GM12878 (cell line): ENCODE measurements at regions of chr16 and their contacts with region 1.

Region 1: GRCh38 chr16:74455213-74455612 is 33.9 kb upstream of the CLEC18B start:
- DNase-seq: no peak
- ATAC-seq: no peak
- H3K4me3 ChIP-seq: no peak overlapping the region
- H3K27ac ChIP-seq: no peak overlapping the region
- H3K4me1 ChIP-seq: peaks cover 17% of the 10 kb centered on the region
- H3K27me3 ChIP-seq: no peaks in the 10 kb centered on the region
- CTCF ChIP-seq: no peak
- EP300 ChIP-seq: no peak
- POLR2A ChIP-seq: no peak
- RAD21 ChIP-seq: no peak

Region 2: DNA sequence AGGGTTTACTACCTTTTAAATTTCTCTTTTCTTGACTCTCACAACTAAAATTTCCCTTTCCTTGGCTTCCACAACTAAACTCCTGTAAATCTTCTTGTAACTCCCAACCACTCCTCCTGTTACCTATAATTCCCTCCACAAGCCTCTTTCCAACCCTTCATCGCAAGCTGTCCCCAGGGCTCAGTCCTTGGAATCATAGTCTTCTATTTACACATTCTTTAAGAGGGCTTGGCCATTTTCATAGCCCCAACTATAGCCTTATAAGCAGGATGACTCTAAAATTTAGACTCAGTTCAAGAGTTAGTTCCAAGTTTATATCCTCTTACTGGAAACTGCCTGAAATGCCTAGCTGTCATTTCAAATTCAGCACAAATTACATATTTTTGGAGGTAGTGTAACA is 127.8 kb after region 1 on chr16:
- CTCF ChIA-PET with region 1: no interaction called
- POLR2A ChIA-PET with region 1: interaction called, 10 read pairs
- RAD21 ChIA-PET with region 1: no interaction called
- SMC1A ChIA-PET with region 1: no interaction called
- in situ Hi-C with region 1: no loop called
- intact Hi-C with region 1: no loop called
- DNase-seq: no peak
- ATAC-seq: no peak
- H3K4me3 ChIP-seq: no peak overlapping the region
- H3K27ac ChIP-seq: no peak overlapping the region; the same call in 1 of the 2 replicates
- H3K4me1 ChIP-seq: peaks cover 22% of the 10 kb centered on the region
- H3K27me3 ChIP-seq: no peaks in the 10 kb centered on the region
- CTCF ChIP-seq: no peak
- EP300 ChIP-seq: no peak
- POLR2A ChIP-seq: no peak
- RAD21 ChIP-seq: no peak